ENCODE measurements at regions of chr1 and their contacts with region 1.

Region 1: DNA sequence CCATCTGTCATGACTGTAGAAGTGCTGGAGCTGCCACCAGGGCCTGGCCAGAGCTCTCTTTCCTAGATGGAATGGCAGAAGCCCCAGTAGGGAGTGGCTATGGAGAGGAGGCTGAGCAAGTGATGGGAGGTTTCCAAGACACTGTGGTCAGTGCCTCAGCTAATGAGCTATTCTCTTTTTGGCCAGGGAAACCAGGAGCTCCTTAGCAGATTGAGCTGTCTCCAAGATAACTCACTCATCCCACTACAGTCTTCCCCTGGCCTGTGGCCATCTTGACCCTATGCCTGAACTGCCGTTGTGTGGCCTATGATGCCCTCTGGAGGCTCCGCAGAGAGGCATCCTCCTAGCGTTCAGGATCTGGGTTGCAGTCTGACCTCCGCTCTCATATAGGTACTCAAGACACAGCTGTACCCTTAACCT is 60.5 kb downstream of the ERI3 start:
- DNase-seq: peak in 1 of 2 experiments; percentile 61
- H3K4me3 ChIP-seq: no peak overlapping the region
- H3K27ac ChIP-seq: no peak overlapping the region
- H3K4me1 ChIP-seq: peaks cover 0 to 2% (median 0%) of the 10 kb centered on the region in 4 experiments; a peak in 1 of 7 replicates
- H3K27me3 ChIP-seq: no peaks in the 10 kb centered on the region
- CTCF ChIP-seq: peak; percentile 81 to 99 (median 89)
- EP300 ChIP-seq: no peak
- POLR2A ChIP-seq: no peak
- RAD21 ChIP-seq: peak; percentile 84 to 87

Region 2: GRCh38 chr1:44103270-44104131 is 191.1 kb before region 1 on chr1:
- CTCF ChIA-PET with region 1: interaction called, 12 read pairs
- POLR2A ChIA-PET with region 1: no interaction called
- DNase-seq: peak in 1 of 2 experiments; percentile 80
- H3K4me3 ChIP-seq: no peak overlapping the region
- H3K27ac ChIP-seq: no peak overlapping the region
- H3K4me1 ChIP-seq: no peaks in the 10 kb centered on the region
- H3K27me3 ChIP-seq: peaks cover 0 to 2% (median 0%) of the 10 kb centered on the region in 4 experiments; a peak in 1 of 7 replicates
- CTCF ChIP-seq: peak; percentile 53 to 63 (median 54)
- EP300 ChIP-seq: no peak
- POLR2A ChIP-seq: no peak
- RAD21 ChIP-seq: peak; percentile 44 to 61

Region 3: GRCh38 chr1:44256762-44257554 is 37.6 kb before region 1 on chr1:
- CTCF ChIA-PET with region 1: interaction called, 26 read pairs
- POLR2A ChIA-PET with region 1: no interaction called
- DNase-seq: no peak
- H3K4me3 ChIP-seq: no peak overlapping the region
- H3K27ac ChIP-seq: no peak overlapping the region
- H3K4me1 ChIP-seq: peaks cover 0 to 11% (median 4%) of the 10 kb centered on the region in 4 experiments; a peak in 4 of 7 replicates
- H3K27me3 ChIP-seq: no peaks in the 10 kb centered on the region
- CTCF ChIP-seq: no peak
- EP300 ChIP-seq: no peak
- POLR2A ChIP-seq: no peak
- RAD21 ChIP-seq: no peak

Region 4: GRCh38 chr1:44275991-44276405 is 18.6 kb before region 1 on chr1:
- CTCF ChIA-PET with region 1: interaction called, 60 read pairs
- POLR2A ChIA-PET with region 1: no interaction called
- DNase-seq: no peak
- H3K4me3 ChIP-seq: no peak overlapping the region
- H3K27ac ChIP-seq: no peak overlapping the region
- H3K4me1 ChIP-seq: peaks cover 0 to 4% (median 1%) of the 10 kb centered on the region in 4 experiments; a peak in 3 of 7 replicates
- H3K27me3 ChIP-seq: no peaks in the 10 kb centered on the region
- CTCF ChIP-seq: no peak
- EP300 ChIP-seq: no peak
- POLR2A ChIP-seq: no peak
- RAD21 ChIP-seq: no peak

Region 5: GRCh38 chr1:44318097-44319088 is 23.8 kb after region 1 on chr1:
- CTCF ChIA-PET with region 1: interaction called, 68 read pairs
- POLR2A ChIA-PET with region 1: no interaction called
- DNase-seq: peak; percentile 54 to 74
- H3K4me3 ChIP-seq: no peak overlapping the region; a peak in 1 of 8 replicates
- H3K27ac ChIP-seq: no peak overlapping the region
- H3K4me1 ChIP-seq: peaks cover 7 to 18% (median 15%) of the 10 kb centered on the region in 4 experiments; a peak in 5 of 7 replicates
- H3K27me3 ChIP-seq: peaks cover 0 to 2% (median 0%) of the 10 kb centered on the region in 4 experiments; a peak in 1 of 7 replicates
- CTCF ChIP-seq: peak; percentile 45 to 82 (median 61)
- EP300 ChIP-seq: peak in 1 of 2 experiments; percentile 54; a peak in 1 of 3 replicates
- POLR2A ChIP-seq: no peak
- RAD21 ChIP-seq: peak; percentile 51; a peak in 3 of 4 replicates

Region 6: GRCh38 chr1:44652445-44653106 is 358.0 kb after region 1 on chr1:
- CTCF ChIA-PET with region 1: interaction called, 27 read pairs
- POLR2A ChIA-PET with region 1: interaction called, 3 read pairs
- DNase-seq: peak; percentile 69 to 94
- H3K4me3 ChIP-seq: no peak overlapping the region
- H3K27ac ChIP-seq: 0 out of 2 replicates have a peak overlapping the region, but pooled peaks have one; percentile 20
- H3K4me1 ChIP-seq: peaks cover 0 to 17% (median 9%) of the 10 kb centered on the region in 4 experiments; a peak in 5 of 7 replicates
- H3K27me3 ChIP-seq: no peaks in the 10 kb centered on the region
- CTCF ChIP-seq: peak; percentile 94 to 100 (median 99)
- EP300 ChIP-seq: no peak
- POLR2A ChIP-seq: no peak
- RAD21 ChIP-seq: peak; percentile 93 to 95